ENCODE measurements at regions of chr1 and their contacts with region 1.

Region 1: GRCh38 chr1:248596615-248597014 is 885 bp downstream of the OR2T10 start:
- DNase-seq: peak in 1 of 14 experiments; percentile 3
- ATAC-seq: no peak
- H3K4me3 ChIP-seq: no peak overlapping the region
- H3K4me3 Mint-ChIP-seq: no peak overlapping the region
- H3K27ac ChIP-seq: no peak overlapping the region
- H3K27ac Mint-ChIP-seq: no peak overlapping the region
- H3K4me1 ChIP-seq: no peaks in the 10 kb centered on the region
- H3K4me1 Mint-ChIP-seq: no peaks in the 10 kb centered on the region
- H3K27me3 ChIP-seq: no peaks in the 10 kb centered on the region
- H3K27me3 Mint-ChIP-seq: no peaks in the 10 kb centered on the region
- CTCF ChIP-seq: no peak

Region 2: GRCh38 chr1:248521859-248522258 is 74.8 kb before region 1 on chr1:
- CTCF ChIA-PET with region 1: no interaction called
- POLR2A ChIA-PET with region 1: no interaction called
- intact Hi-C with region 1: loop called in 1 of 2 experiments (anchors 10 kb)
- DNase-seq: no peak
- ATAC-seq: no peak
- H3K4me3 ChIP-seq: no peak overlapping the region
- H3K4me3 Mint-ChIP-seq: no peak overlapping the region
- H3K27ac ChIP-seq: no peak overlapping the region
- H3K27ac Mint-ChIP-seq: no peak overlapping the region
- H3K4me1 ChIP-seq: no peaks in the 10 kb centered on the region
- H3K4me1 Mint-ChIP-seq: no peaks in the 10 kb centered on the region
- H3K27me3 ChIP-seq: peaks cover 0 to 2% of the 10 kb centered on the region in 2 experiments
- H3K27me3 Mint-ChIP-seq: peaks cover 6% of the 10 kb centered on the region
- CTCF ChIP-seq: no peak